Pancreas (tissue), 10 donors: ENCODE measurements at regions of chr12 and their contacts with region 1.

Region 1: DNA sequence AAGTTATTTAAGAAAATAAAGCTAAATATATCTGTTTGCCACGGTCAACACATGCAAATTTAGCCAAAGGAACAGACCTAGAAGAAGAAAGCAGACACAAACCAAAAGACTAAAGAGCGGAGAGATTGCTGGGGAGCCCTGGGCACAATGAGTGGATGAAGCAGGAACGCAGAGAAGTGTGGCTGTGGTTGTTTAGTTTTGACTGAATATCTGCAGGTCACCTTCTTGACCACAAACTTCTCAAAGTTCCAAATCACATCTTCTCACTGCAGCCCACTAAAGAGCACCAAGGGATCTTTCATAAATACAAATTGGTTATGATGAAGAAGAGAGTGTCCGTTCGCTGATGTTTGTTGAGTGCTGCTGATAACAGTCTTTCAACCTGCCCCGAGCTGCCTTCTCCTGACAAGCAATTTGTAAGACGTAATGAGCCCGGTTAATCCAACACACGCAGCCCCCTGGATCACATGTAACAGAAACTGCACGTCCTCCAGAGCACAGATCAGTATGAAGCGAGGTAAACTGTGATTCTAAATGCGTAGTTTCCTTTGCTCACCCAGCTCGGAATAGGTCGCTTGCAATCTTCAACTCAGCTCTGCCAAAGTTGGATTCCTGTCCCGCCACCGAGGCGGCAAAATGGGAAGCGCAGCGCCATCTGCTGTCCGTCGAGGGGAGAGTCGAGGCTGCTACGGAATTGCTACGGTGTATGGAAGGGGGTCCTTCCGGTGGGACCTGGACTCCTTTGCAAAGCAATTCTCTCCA is 120.8 kb downstream of the GXYLT1 start:
- DNase-seq: peak; percentile 44 to 90 (median 76)
- ATAC-seq: peak; percentile 86 to 99 (median 95)
- H3K4me3 ChIP-seq: peak overlapping the region in 2 of 4 donors; percentile 12 to 38
- H3K27ac ChIP-seq: no peak overlapping the region
- H3K4me1 ChIP-seq: no peaks in the 10 kb centered on the region
- H3K27me3 ChIP-seq: peaks cover 0 to 3% (median 0%) of the 10 kb centered on the region in 4 donors
- CTCF ChIP-seq: peak; percentile 74 to 87 (median 76)

Region 2: GRCh38 chr12:40946612-40947194 is 1077.2 kb before region 1 on chr12:
- intact Hi-C with region 1: loop called in 1 of 3 experiments (anchors 10 kb)
- DNase-seq: no peak
- ATAC-seq: peak in 3 of 4 donors; percentile 51 to 64 (median 61)
- H3K4me3 ChIP-seq: no peak overlapping the region
- H3K27ac ChIP-seq: no peak overlapping the region
- H3K4me1 ChIP-seq: no peaks in the 10 kb centered on the region
- H3K27me3 ChIP-seq: no peaks in the 10 kb centered on the region
- CTCF ChIP-seq: peak; percentile 17 to 58 (median 38)

Region 3: GRCh38 chr12:41277116-41277945 is 746.6 kb before region 1 on chr12:
- intact Hi-C with region 1: loop called in 2 of 3 experiments (anchors 5 to 10 kb)
- DNase-seq: peak in 1 of 6 donors; percentile 8
- ATAC-seq: peak in 3 of 4 donors; percentile 72 to 78 (median 73)
- H3K4me3 ChIP-seq: no peak overlapping the region
- H3K27ac ChIP-seq: no peak overlapping the region
- H3K4me1 ChIP-seq: peaks cover 0 to 3% (median 0%) of the 10 kb centered on the region in 3 donors
- H3K27me3 ChIP-seq: no peaks in the 10 kb centered on the region
- CTCF ChIP-seq: peak in 3 of 4 donors; percentile 32 to 54 (median 44)

Region 4: DNA sequence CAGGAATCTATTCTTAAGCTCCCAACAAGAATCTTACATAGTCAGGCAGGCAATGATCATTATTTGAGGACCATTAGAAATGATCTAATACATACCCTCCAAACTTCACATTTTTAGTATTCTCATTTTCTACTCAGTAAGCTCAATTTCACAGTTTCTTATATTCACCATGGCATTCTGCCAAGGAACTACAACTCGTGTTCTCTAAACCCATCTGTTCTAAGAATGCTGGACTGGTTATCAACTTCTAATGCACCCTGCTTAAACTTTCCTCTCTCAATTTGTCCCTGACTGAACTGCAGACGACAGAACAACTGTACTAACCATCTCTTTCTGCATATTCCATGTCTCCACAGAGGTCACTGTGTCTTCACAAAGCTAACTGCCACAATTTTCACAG is 62.1 kb after region 1 on chr12:
- intact Hi-C with region 1: no loop called
- DNase-seq: no peak
- ATAC-seq: no peak
- H3K4me3 ChIP-seq: no peak overlapping the region
- H3K27ac ChIP-seq: no peak overlapping the region
- H3K4me1 ChIP-seq: no peaks in the 10 kb centered on the region
- H3K27me3 ChIP-seq: no peaks in the 10 kb centered on the region
- CTCF ChIP-seq: no peak

Region 5: GRCh38 chr12:42119085-42119633 is 95.2 kb after region 1 on chr12:
- intact Hi-C with region 1: no loop called
- DNase-seq: no peak
- ATAC-seq: no peak
- H3K4me3 ChIP-seq: no peak overlapping the region
- H3K27ac ChIP-seq: no peak overlapping the region
- H3K4me1 ChIP-seq: peaks cover 0 to under 1% (median under 1%) of the 10 kb centered on the region in 3 donors
- H3K27me3 ChIP-seq: no peaks in the 10 kb centered on the region
- CTCF ChIP-seq: no peak